ENCODE measurements at regions of chr13 and their contacts with region 1.

Region 1: GRCh38 chr13:45047394-45048310 is 58.3 kb downstream of the GPALPP1 start:
- DNase-seq: peak; percentile 60
- H3K4me3 ChIP-seq: peak overlapping the region; percentile 59
- CTCF ChIP-seq: peak; percentile 74

Region 2: GRCh38 chr13:45036206-45036605 is 11.4 kb before region 1 on chr13:
- CTCF ChIA-PET with region 1: interaction called, 14 read pairs
- POLR2A ChIA-PET with region 1: no interaction called
- DNase-seq: no peak
- H3K4me3 ChIP-seq: no peak overlapping the region
- CTCF ChIP-seq: no peak

Region 3: DNA sequence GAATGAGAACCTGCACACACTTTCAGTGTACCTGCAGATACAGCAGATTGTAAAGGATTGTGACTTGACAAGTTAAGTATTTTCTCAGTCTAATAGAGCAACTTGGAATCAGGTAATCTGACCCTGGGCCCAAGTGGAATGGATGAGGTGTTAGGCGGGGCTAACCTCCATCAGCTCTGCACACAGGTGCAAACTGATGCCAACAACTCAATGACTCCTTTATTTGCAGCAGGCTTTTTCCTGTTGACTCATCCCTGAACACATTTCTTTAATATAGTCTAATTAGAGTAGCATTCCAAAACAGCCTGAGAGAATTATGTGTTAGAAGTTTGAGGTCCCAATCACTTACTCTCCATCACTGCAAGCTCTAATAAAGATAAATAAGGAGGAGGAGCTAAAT is 244.5 kb after region 1 on chr13:
- CTCF ChIA-PET with region 1: interaction called, 25 read pairs
- POLR2A ChIA-PET with region 1: no interaction called
- DNase-seq: no peak
- H3K4me3 ChIP-seq: no peak overlapping the region
- CTCF ChIP-seq: no peak

Region 4: DNA sequence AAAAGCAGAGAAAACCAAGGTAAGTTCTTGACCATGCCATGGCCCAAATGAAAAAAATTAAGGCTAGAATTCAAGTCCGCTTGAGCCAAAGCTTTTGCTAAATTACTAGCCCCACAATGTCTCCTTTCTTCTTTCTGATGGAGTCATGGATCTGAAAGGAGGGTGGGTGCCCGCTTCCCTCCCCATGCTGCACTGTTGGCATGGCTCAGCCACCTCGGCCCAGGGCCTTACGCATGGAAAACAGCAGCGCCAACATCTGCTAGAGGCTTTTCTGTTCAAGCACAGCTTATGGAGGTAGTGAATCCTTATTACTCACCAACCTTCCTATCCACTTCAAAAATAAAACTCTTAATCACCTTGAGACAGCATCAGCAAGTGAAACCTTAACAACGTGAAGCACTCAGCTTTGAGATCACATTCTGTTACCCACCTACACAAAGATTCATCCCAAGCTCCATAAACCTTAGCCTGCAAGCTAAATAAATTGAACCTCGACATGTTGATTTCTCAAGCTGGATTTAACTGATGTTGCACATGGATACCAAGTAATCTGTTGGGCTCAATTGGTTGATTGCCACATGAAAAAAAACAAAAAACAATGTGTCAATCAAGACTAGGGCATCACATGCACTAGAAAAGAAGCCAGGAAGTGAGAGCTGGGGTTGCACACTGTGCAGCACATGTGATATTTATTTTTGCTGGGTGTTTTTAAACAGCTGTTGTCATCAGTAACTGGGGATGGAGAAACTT is 250.0 kb after region 1 on chr13:
- CTCF ChIA-PET with region 1: interaction called, 179 read pairs
- POLR2A ChIA-PET with region 1: no interaction called
- DNase-seq: no peak
- H3K4me3 ChIP-seq: no peak overlapping the region
- CTCF ChIP-seq: no peak

Region 5: DNA sequence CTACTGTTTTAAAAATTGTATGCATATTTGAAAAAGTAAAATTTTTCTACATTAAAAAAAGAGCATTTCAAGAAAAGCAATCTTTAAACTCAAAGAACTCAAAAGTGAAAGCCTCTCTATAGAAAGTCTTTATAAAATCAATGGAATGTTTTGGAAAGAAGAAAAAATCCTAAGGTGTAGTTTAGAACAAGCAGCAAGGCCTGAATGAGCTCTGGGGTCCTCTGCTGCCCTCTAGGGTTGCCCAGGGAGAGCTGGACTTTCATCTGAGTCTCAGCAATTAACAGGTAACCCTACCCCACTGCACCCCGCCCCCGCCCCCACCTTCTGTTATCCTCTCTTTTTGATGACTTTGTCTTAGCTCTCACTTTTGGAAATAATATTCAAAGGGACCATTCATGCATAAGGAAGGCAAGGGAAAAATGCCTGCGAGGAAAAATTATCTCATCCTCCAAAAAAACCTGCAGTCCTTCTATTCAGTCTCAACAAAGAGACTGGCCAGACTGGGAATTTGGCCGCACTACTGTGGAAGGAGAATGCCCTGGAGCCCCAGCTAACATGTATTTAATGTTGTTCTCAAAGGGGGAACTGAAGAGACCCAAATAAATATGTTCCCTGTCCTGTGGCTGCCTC is 346.4 kb after region 1 on chr13:
- CTCF ChIA-PET with region 1: interaction called, 12 read pairs
- POLR2A ChIA-PET with region 1: no interaction called
- DNase-seq: no peak
- H3K4me3 ChIP-seq: no peak overlapping the region
- CTCF ChIP-seq: peak; percentile 76